CD4-positive, alpha-beta T cell (primary cell): ENCODE measurements at regions of chr10 and their contacts with region 1.

Region 1: DNA sequence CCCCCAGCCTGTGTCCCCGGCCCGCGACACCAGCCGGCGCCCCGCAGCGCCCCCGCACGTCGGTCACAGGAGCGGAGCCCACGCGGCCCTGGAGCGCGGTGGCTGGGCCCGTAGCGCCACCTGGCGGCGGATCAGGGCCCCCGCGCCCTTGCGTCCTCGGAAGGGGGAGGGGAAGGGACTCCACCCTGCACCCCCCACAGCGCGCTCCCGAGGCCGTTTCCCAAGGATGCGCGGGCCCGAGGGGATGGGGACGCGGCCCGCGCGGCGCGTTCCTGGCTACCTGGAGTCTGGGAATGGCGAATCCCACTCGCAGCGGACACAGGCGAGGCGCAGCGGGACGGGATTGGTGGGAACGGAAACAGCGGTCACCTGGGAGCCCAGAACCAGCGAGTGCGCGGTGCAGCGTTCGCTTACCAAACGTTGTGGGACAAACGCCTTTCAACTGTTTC is 23.8 kb upstream of the MKI67 start:
- DNase-seq: peak; percentile 62 to 94 (median 72)
- ATAC-seq: peak; percentile 98
- H3K4me3 ChIP-seq: peak overlapping the region; percentile 73
- H3K4me3 Mint-ChIP-seq: peak overlapping the region; percentile 69
- H3K27ac ChIP-seq: no peak overlapping the region
- H3K27ac Mint-ChIP-seq: no peak overlapping the region
- H3K4me1 ChIP-seq: peaks cover 11% of the 10 kb centered on the region
- H3K4me1 Mint-ChIP-seq: no peaks in the 10 kb centered on the region
- H3K27me3 ChIP-seq: peaks cover 0 to 2% of the 10 kb centered on the region in 2 experiments
- H3K27me3 Mint-ChIP-seq: no peaks in the 10 kb centered on the region
- CTCF ChIP-seq: peak; percentile 77

Region 2: DNA sequence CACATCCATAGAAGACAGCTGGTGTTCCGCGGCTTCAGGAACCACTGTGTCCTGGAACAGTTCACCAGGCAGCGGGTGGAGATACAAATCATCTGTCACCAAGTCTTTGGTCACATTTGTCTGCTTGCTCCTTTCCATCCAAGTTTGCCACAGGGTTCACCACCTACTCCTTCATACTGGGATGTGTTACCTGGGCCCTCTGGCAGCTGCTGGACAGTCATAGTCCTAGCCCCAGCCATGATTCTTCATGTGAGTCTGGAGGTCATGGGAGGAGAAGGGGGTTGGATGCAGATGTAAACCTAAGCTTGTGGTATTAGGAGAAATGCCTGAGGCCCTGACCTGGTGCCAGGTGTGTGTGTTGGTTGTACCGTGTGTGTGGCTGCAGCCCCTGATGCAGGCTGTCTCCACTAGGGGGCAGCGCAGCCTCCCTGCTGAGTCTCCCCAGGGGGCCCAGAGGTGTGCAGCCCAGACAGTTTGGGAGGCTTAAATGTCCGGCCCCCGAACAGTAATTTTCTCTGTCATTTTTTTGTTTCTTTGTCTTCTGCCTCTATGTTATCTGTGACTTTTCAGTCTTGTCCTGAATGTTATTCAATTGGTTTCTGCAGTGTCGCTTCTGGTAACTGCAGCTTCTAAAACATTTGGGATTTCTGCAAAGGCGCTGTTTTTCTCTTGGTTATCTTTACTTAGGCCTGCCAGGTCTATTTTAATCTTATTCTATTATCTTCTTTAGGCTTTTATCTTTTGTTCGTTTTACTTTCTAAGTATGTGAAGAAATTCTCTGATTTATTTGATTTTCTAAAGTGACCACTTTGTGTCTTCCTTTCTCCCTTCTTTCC is 586.1 kb before region 1 on chr10:
- CTCF ChIA-PET with region 1: no interaction called
- POLR2A ChIA-PET with region 1: no interaction called
- intact Hi-C with region 1: loop called in 1 of 2 experiments (anchors 5 kb)
- DNase-seq: peak in 6 of 14 experiments; percentile 1 to 38 (median 16)
- ATAC-seq: no peak
- H3K4me3 ChIP-seq: no peak overlapping the region
- H3K4me3 Mint-ChIP-seq: no peak overlapping the region
- H3K27ac ChIP-seq: no peak overlapping the region
- H3K27ac Mint-ChIP-seq: no peak overlapping the region
- H3K4me1 ChIP-seq: no peaks in the 10 kb centered on the region
- H3K4me1 Mint-ChIP-seq: no peaks in the 10 kb centered on the region
- H3K27me3 ChIP-seq: no peaks in the 10 kb centered on the region
- H3K27me3 Mint-ChIP-seq: peaks cover 28% of the 10 kb centered on the region
- CTCF ChIP-seq: peak; percentile 35

Region 3: GRCh38 chr10:127906548-127907377 is 243.3 kb before region 1 on chr10 and contains the start of gene PTPRE:
- CTCF ChIA-PET with region 1: interaction called, 3 read pairs
- POLR2A ChIA-PET with region 1: no interaction called
- intact Hi-C with region 1: loop called (anchors 2 kb)
- DNase-seq: peak; percentile 24 to 83 (median 57)
- ATAC-seq: peak; percentile 98
- H3K4me3 ChIP-seq: peak within 1 kb of the TSS; percentile 16
- H3K4me3 Mint-ChIP-seq: peak within 1 kb of the TSS; percentile 61
- H3K27ac ChIP-seq: no peak within 1 kb of the TSS
- H3K27ac Mint-ChIP-seq: no peak within 1 kb of the TSS
- H3K4me1 ChIP-seq: peaks cover 6% of the 10 kb centered on the region
- H3K4me1 Mint-ChIP-seq: no peaks in the 10 kb centered on the region
- H3K27me3 ChIP-seq: peaks cover 7 to 16% of the 10 kb centered on the region in 2 experiments
- H3K27me3 Mint-ChIP-seq: peaks cover 36% of the 10 kb centered on the region
- CTCF ChIP-seq: no peak
- total RNA-seq, gene PTPRE: 47.6 to 55.1 TPM

Region 4: DNA sequence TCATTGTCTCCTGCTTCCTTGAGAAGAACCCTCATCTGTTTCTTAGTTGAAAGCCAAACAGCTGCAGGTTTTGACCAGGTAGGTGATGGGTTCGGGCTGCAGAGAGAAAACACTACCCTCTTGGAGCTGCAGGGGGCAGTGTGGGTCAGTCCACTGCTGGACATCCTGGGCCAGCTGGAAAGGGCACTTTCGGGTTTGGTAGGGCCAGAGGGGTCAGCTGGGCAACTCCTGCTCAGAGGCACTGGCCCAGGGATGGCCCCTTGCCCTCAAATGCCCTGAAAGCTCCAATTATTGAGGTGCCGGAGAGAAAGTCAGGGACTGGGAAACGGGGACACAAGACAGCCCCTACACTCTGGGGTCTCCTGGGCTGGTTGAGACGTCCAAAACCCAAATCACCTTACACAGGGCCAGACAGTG is 114.5 kb before region 1 on chr10:
- CTCF ChIA-PET with region 1: interaction called, 7 read pairs
- POLR2A ChIA-PET with region 1: no interaction called
- intact Hi-C with region 1: loop called in 1 of 2 experiments (anchors 5 kb)
- DNase-seq: peak; percentile 41 to 81 (median 56)
- ATAC-seq: peak; percentile 73
- H3K4me3 ChIP-seq: no peak overlapping the region
- H3K4me3 Mint-ChIP-seq: no peak overlapping the region
- H3K27ac ChIP-seq: no peak overlapping the region
- H3K27ac Mint-ChIP-seq: no peak overlapping the region
- H3K4me1 ChIP-seq: peaks cover 5% of the 10 kb centered on the region
- H3K4me1 Mint-ChIP-seq: peaks cover 3% of the 10 kb centered on the region
- H3K27me3 ChIP-seq: no peaks in the 10 kb centered on the region
- H3K27me3 Mint-ChIP-seq: no peaks in the 10 kb centered on the region
- CTCF ChIP-seq: peak; percentile 78

Region 5: GRCh38 chr10:128125944-128126764 is 23.9 kb before region 1 on chr10 and contains the start of gene MKI67:
- CTCF ChIA-PET with region 1: interaction called, 4 read pairs
- POLR2A ChIA-PET with region 1: no interaction called
- intact Hi-C with region 1: loop called in 1 of 2 experiments (anchors 1 kb)
- DNase-seq: peak; percentile 81 to 96 (median 84)
- ATAC-seq: peak; percentile 93
- H3K4me3 ChIP-seq: peak within 1 kb of the TSS; percentile 61
- H3K4me3 Mint-ChIP-seq: peak within 1 kb of the TSS; percentile 91
- H3K27ac ChIP-seq: no peak within 1 kb of the TSS
- H3K27ac Mint-ChIP-seq: peak within 1 kb of the TSS; percentile 16
- H3K4me1 ChIP-seq: peaks cover 20% of the 10 kb centered on the region
- H3K4me1 Mint-ChIP-seq: peaks cover 28% of the 10 kb centered on the region
- H3K27me3 ChIP-seq: peaks cover 16 to 28% of the 10 kb centered on the region in 2 experiments
- H3K27me3 Mint-ChIP-seq: peaks cover 41% of the 10 kb centered on the region
- CTCF ChIP-seq: no peak
- total RNA-seq, gene MKI67: 0.92 to 1.2 TPM

Region 6: GRCh38 chr10:129369566-129369965 is 1219.5 kb after region 1 on chr10:
- CTCF ChIA-PET with region 1: no interaction called
- POLR2A ChIA-PET with region 1: no interaction called
- intact Hi-C with region 1: no loop called
- DNase-seq: no peak
- ATAC-seq: no peak
- H3K4me3 ChIP-seq: no peak overlapping the region
- H3K4me3 Mint-ChIP-seq: no peak overlapping the region
- H3K27ac ChIP-seq: no peak overlapping the region
- H3K27ac Mint-ChIP-seq: no peak overlapping the region
- H3K4me1 ChIP-seq: no peaks in the 10 kb centered on the region
- H3K4me1 Mint-ChIP-seq: no peaks in the 10 kb centered on the region
- H3K27me3 ChIP-seq: peaks cover 8 to 14% of the 10 kb centered on the region in 2 experiments
- H3K27me3 Mint-ChIP-seq: peaks cover 40% of the 10 kb centered on the region
- CTCF ChIP-seq: no peak